ENCODE measurements at regions of chr6 and their contacts with region 1.

Region 1: DNA sequence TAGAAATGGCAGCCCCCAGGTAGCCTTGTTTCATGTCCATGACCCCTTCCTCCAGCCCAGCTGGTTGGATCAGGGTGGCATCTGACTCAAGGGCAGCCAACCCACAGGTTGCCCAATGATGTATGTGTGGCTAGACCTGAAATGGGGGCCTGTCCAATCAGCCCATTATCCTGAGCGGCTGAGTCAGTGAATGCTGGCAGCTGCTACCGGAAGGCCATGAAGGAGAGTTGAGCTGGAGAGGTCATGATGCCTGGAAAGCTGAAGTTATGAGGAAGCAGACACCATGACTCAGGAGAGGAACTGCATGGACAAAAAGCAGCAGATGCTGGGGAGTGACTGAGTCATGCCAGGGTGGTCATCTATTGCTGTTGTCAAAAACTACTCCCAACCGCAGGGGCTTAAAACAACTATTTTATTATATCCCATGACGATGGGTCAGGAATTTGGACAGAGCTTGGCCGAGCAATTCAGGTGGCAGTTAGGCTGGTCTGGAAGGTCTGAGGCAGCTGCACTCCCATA is 67.3 kb downstream of the MDGA1 start:
- DNase-seq: peak; percentile 93 to 100
- H3K4me3 ChIP-seq: no peak overlapping the region
- H3K27ac ChIP-seq: peak overlapping the region; percentile 91
- H3K4me1 ChIP-seq: peaks cover 44% of the 10 kb centered on the region
- H3K27me3 ChIP-seq: no peaks in the 10 kb centered on the region
- CTCF ChIP-seq: no peak

Region 2: GRCh38 chr6:37538107-37538506 is 92.2 kb before region 1 on chr6:
- CTCF ChIA-PET with region 1: interaction called, 12 read pairs
- POLR2A ChIA-PET with region 1: no interaction called
- intact Hi-C with region 1: loop called (anchors 5 kb)
- DNase-seq: peak in 1 of 2 experiments; percentile 50
- H3K4me3 ChIP-seq: no peak overlapping the region
- H3K27ac ChIP-seq: no peak overlapping the region
- H3K4me1 ChIP-seq: no peaks in the 10 kb centered on the region
- H3K27me3 ChIP-seq: no peaks in the 10 kb centered on the region
- CTCF ChIP-seq: peak; percentile 69

Region 3: DNA sequence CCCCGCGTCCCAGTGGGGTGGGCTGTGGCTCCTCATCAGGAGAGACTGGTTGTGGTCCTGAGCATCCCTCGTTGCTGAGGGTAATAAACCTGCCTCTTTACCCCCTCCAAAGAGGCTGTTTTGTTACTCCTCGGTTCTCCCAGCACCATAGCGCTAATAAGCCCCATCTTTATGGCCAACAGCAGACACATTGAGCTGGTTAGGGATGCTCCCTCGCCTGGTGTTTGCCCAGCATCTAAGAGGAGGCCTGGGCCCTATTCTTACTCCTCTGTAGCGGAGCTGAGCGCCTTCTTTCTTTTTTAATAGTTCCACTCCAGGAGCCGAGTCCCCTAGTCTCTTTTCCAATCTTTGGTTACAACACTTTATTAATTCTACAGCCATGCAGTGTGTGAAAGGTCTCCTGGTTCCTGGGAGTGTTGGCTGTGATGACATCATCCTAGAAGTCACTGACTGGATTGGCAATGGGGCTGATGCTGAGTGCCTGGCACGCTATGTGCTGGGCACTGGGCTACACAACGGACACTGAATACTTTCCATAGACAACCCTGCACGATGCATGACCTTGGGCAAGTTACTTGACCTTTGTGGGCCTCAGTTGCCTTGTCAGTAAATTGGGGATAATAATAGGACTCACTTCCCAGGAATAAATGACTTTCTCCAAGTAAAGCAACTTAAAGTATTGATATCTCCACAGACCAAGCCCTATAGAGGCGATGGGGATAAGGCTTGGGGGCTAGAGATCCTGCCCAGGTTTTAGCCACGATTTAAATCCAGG is 80.0 kb before region 1 on chr6:
- CTCF ChIA-PET with region 1: no interaction called
- POLR2A ChIA-PET with region 1: no interaction called
- intact Hi-C with region 1: loop called (anchors 1 kb)
- DNase-seq: peak in 1 of 2 experiments; percentile 68
- H3K4me3 ChIP-seq: no peak overlapping the region
- H3K27ac ChIP-seq: no peak overlapping the region
- H3K4me1 ChIP-seq: peaks cover 53% of the 10 kb centered on the region
- H3K27me3 ChIP-seq: no peaks in the 10 kb centered on the region
- CTCF ChIP-seq: no peak

Region 4: GRCh38 chr6:37582306-37582705 is 48.0 kb before region 1 on chr6:
- CTCF ChIA-PET with region 1: no interaction called
- POLR2A ChIA-PET with region 1: interaction called, 3 read pairs
- intact Hi-C with region 1: loop called (anchors 2 kb)
- DNase-seq: peak; percentile 80 to 84
- H3K4me3 ChIP-seq: no peak overlapping the region
- H3K27ac ChIP-seq: peak overlapping the region; percentile 31; the same call in 1 of the 2 replicates
- H3K4me1 ChIP-seq: peaks cover 34% of the 10 kb centered on the region
- H3K27me3 ChIP-seq: no peaks in the 10 kb centered on the region
- CTCF ChIP-seq: no peak

Region 5: GRCh38 chr6:37611516-37611915 is 18.8 kb before region 1 on chr6:
- CTCF ChIA-PET with region 1: interaction called, 3 read pairs
- POLR2A ChIA-PET with region 1: interaction called, 10 read pairs
- intact Hi-C with region 1: no loop called
- DNase-seq: no peak
- H3K4me3 ChIP-seq: no peak overlapping the region
- H3K27ac ChIP-seq: no peak overlapping the region
- H3K4me1 ChIP-seq: peaks cover 9% of the 10 kb centered on the region; the same call in 1 of the 2 replicates
- H3K27me3 ChIP-seq: no peaks in the 10 kb centered on the region
- CTCF ChIP-seq: no peak

Region 6: DNA sequence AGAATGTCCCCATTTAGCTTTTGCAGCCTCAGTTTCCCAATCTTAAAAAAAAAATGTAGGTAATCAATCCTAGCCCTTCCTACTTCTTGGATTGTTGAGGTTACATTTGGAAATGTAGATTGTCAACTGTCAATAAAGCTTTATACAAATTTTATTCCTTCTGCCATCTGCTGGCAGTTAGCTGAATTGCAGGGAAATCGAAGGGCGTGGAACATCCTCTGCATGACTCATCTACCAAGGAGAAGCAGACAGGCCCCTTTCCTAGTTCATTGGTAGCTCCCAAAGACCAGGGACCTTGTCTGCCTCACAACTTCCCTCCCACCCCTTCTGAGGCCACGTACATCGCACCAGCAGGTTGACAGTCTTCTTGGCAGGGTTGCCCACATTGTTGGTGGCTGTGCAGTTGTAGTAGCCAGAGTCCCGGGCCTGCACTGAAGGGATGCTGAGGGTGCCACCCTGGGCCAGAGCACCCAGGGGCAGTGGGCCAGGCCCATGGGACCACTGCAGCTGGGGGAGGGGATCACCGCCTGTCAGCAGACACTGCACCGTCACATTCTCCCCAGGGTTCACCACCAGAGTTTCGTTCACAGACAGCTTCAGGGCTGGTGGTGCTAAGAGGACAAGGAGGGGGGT is 23.7 kb after region 1 on chr6:
- CTCF ChIA-PET with region 1: no interaction called
- POLR2A ChIA-PET with region 1: interaction called, 3 read pairs
- intact Hi-C with region 1: loop called (anchors 2 kb)
- DNase-seq: no peak
- H3K4me3 ChIP-seq: no peak overlapping the region
- H3K27ac ChIP-seq: no peak overlapping the region
- H3K4me1 ChIP-seq: peaks cover 16% of the 10 kb centered on the region
- H3K27me3 ChIP-seq: no peaks in the 10 kb centered on the region
- CTCF ChIP-seq: peak; percentile 94

Measured in PC-9 (cell line).